ENCODE measurements at regions of chr10 and their contacts with region 1.

Region 1: GRCh38 chr10:73246783-73247508 is at the start of gene DNAJC9:
- DNase-seq: peak; percentile 98
- ATAC-seq: peak; percentile 94
- H3K4me3 Mint-ChIP-seq: peak within 1 kb of the TSS; percentile 100
- H3K27ac Mint-ChIP-seq: peak within 1 kb of the TSS; percentile 97
- H3K4me1 Mint-ChIP-seq: peaks cover 53% of the 10 kb centered on the region
- H3K27me3 Mint-ChIP-seq: no peaks in the 10 kb centered on the region
- CTCF ChIP-seq: no peak
- total RNA-seq, gene DNAJC9: 40.9 to 42.2 TPM

Region 2: GRCh38 chr10:73263948-73264347 is 17.0 kb after region 1 on chr10:
- CTCF ChIA-PET with region 1: interaction called, 3 read pairs
- POLR2A ChIA-PET with region 1: interaction called, 11 read pairs
- intact Hi-C with region 1: no loop called
- DNase-seq: peak; percentile 18
- ATAC-seq: peak; percentile 47
- H3K4me3 Mint-ChIP-seq: no peak overlapping the region
- H3K27ac Mint-ChIP-seq: no peak overlapping the region
- H3K4me1 Mint-ChIP-seq: peaks cover 2% of the 10 kb centered on the region
- H3K27me3 Mint-ChIP-seq: no peaks in the 10 kb centered on the region
- CTCF ChIP-seq: peak; percentile 71

Region 3: DNA sequence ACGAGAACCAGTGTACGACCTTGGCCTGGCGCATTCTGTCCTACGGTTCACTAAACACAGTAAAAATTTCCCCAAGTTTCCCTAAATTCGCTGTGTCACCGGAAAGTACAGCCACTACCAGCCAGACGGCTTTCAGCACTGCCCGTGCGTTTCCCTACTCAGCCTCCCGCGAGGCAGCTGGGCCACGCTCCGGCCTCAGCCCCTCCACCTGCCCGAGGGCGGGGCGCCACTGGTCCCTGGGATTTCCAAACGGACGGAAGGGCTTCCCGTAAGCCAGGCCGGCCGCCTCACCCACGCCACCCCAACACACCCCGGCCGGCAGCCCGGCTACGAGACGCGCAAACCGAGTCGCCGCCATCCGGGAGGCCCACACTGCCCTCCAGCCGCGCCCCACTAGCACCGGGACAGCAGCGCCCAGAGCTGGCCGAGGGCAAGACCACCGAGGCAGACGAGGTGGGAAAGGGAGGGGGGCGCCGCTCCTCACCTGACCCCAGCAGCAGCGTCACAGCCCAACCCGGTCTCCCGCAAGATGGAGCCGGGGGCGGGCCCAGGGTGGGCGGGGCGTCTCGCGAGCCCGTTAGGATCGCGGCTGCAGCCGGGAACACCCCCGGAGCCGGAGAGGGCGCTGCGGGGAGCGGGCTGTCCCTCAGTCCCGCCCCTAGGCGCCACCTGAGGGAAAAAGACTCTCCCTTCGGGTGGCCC is 166.7 kb after region 1 on chr10 and contains the start of gene ANXA7:
- CTCF ChIA-PET with region 1: interaction called, 4 read pairs
- POLR2A ChIA-PET with region 1: interaction called, 12 read pairs
- intact Hi-C with region 1: no loop called
- DNase-seq: peak; percentile 97
- ATAC-seq: peak; percentile 96
- H3K4me3 Mint-ChIP-seq: peak within 1 kb of the TSS; percentile 92
- H3K27ac Mint-ChIP-seq: peak within 1 kb of the TSS; percentile 92
- H3K4me1 Mint-ChIP-seq: peaks cover 46% of the 10 kb centered on the region
- H3K27me3 Mint-ChIP-seq: peaks cover 2% of the 10 kb centered on the region
- CTCF ChIP-seq: no peak
- total RNA-seq, gene ANXA7: 101 to 103 TPM

Region 4: GRCh38 chr10:73495884-73496674 is 249.1 kb after region 1 on chr10 and contains the start of gene PPP3CB:
- CTCF ChIA-PET with region 1: no interaction called
- POLR2A ChIA-PET with region 1: interaction called, 6 read pairs
- intact Hi-C with region 1: loop called (anchors 10 kb)
- DNase-seq: peak; percentile 96
- ATAC-seq: peak; percentile 84
- H3K4me3 Mint-ChIP-seq: peak within 1 kb of the TSS; percentile 86
- H3K27ac Mint-ChIP-seq: peak within 1 kb of the TSS; percentile 97
- H3K4me1 Mint-ChIP-seq: peaks cover 41% of the 10 kb centered on the region
- H3K27me3 Mint-ChIP-seq: no peaks in the 10 kb centered on the region
- CTCF ChIP-seq: no peak
- total RNA-seq, gene PPP3CB: 35.8 to 36.5 TPM